H1 (cell line): ENCODE measurements at regions of chr11 and their contacts with region 1.

Region 1: GRCh38 chr11:66883016-66883968 is 26.4 kb downstream of the LRFN4 start:
- DNase-seq: peak in 1 of 2 experiments; percentile 97
- H3K4me3 ChIP-seq: no peak overlapping the region
- H3K27ac ChIP-seq: no peak overlapping the region
- H3K4me1 ChIP-seq: peaks cover 4 to 25% (median 16%) of the 10 kb centered on the region in 4 experiments
- H3K27me3 ChIP-seq: no peaks in the 10 kb centered on the region
- CTCF ChIP-seq: peak; percentile 83 to 95 (median 95)
- EP300 ChIP-seq: no peak
- POLR2A ChIP-seq: no peak
- RAD21 ChIP-seq: peak; percentile 81 to 83

Region 2: DNA sequence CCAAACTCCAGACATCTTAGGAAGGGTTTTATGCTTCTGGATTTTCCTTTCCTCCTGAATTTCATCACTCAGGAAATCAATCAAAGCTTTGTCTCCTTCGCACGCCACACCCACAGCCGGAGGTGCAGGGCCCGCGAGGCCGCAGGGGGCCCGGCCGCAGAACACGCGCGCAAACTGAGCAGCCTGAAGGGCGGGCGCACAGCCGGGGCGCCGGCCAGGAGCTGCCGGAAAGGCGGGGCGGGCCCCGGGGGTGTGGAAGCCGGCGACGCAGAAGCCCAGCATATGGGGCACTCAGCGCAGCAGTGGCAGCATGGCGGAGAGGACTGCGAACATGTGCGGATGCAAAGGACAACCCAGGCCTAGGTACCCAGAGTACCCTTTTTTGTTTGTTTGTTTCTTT is 121.2 kb before region 1 on chr11:
- CTCF ChIA-PET with region 1: no interaction called
- POLR2A ChIA-PET with region 1: no interaction called
- DNase-seq: no peak
- H3K4me3 ChIP-seq: no peak overlapping the region
- H3K27ac ChIP-seq: no peak overlapping the region
- H3K4me1 ChIP-seq: no peaks in the 10 kb centered on the region
- H3K27me3 ChIP-seq: no peaks in the 10 kb centered on the region
- CTCF ChIP-seq: no peak
- EP300 ChIP-seq: no peak
- POLR2A ChIP-seq: no peak
- RAD21 ChIP-seq: no peak

Region 3: GRCh38 chr11:66842896-66843775 is 40.2 kb before region 1 on chr11 and contains the start of gene RCE1:
- CTCF ChIA-PET with region 1: interaction called, 48 read pairs
- POLR2A ChIA-PET with region 1: interaction called, 5 read pairs
- DNase-seq: peak in 1 of 2 experiments; percentile 96
- H3K4me3 ChIP-seq: peak within 1 kb of the TSS; percentile 79 to 92 (median 90)
- H3K27ac ChIP-seq: peak within 1 kb of the TSS; percentile 88
- H3K4me1 ChIP-seq: peaks cover 0 to 11% (median 3%) of the 10 kb centered on the region in 4 experiments; a peak in 4 of 7 replicates
- H3K27me3 ChIP-seq: no peaks in the 10 kb centered on the region
- CTCF ChIP-seq: no peak
- EP300 ChIP-seq: peak in 1 of 2 experiments; percentile 40; a peak in 1 of 3 replicates
- POLR2A ChIP-seq: peak; percentile 77 to 98
- RAD21 ChIP-seq: no peak
- total RNA-seq, gene RCE1: 33.7 and 35.8 TPM in 2 replicates

Region 4: DNA sequence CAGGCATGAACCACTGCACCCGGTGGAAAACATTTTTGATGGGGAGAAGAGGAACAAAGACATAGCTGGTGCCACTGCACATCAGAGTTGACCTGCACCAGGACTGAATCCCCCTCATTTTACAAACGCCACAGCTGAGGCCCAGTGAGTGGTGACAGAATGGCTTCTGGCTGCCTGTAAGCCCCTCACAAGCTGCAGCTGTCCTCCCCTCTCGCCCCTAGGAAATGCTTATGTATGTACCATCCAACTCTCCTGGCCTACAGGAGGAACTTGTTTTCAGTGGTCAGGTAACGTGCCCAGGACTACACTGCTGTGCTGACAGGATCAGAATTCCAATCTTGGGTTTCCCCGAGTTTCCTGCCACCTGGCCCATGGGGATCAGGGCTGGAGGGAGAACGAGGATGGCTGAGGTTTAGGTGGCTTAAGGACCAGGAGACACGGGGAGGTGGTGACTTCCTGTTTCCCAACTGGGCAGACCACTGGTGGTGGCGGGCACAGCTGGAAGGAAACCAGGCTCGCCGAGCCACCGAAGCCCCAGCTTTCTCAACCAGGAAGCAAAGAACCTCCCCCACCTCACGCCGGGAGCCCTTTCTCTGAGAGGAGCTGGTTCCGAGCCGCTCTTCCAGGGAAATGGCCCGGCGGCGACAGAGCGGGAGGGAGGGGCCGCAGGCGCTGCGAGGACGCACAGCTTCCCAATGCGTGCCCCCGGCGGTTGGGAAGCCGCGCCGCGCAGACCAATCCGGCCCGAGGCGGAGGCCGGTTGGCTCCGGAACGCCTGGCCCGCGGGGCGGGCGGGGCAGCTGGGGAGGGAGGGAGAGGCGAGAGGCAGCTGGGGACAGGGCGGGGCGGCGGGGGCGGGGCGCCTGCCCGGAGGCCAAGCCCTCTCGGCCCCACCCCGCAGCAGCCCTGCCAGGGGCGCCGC is 27.5 kb before region 1 on chr11:
- CTCF ChIA-PET with region 1: interaction called, 199 read pairs
- POLR2A ChIA-PET with region 1: interaction called, 6 read pairs
- DNase-seq: peak; percentile 78 to 94
- H3K4me3 ChIP-seq: peak overlapping the region; percentile 71 to 92 (median 86)
- H3K27ac ChIP-seq: peak overlapping the region; percentile 78
- H3K4me1 ChIP-seq: peaks cover 5 to 20% (median 9%) of the 10 kb centered on the region in 4 experiments
- H3K27me3 ChIP-seq: no peaks in the 10 kb centered on the region
- CTCF ChIP-seq: no peak
- EP300 ChIP-seq: no peak
- POLR2A ChIP-seq: peak in 1 of 2 experiments; percentile 70; a peak in 2 of 3 replicates
- RAD21 ChIP-seq: no peak; a peak in 1 of 4 replicates

Region 5: DNA sequence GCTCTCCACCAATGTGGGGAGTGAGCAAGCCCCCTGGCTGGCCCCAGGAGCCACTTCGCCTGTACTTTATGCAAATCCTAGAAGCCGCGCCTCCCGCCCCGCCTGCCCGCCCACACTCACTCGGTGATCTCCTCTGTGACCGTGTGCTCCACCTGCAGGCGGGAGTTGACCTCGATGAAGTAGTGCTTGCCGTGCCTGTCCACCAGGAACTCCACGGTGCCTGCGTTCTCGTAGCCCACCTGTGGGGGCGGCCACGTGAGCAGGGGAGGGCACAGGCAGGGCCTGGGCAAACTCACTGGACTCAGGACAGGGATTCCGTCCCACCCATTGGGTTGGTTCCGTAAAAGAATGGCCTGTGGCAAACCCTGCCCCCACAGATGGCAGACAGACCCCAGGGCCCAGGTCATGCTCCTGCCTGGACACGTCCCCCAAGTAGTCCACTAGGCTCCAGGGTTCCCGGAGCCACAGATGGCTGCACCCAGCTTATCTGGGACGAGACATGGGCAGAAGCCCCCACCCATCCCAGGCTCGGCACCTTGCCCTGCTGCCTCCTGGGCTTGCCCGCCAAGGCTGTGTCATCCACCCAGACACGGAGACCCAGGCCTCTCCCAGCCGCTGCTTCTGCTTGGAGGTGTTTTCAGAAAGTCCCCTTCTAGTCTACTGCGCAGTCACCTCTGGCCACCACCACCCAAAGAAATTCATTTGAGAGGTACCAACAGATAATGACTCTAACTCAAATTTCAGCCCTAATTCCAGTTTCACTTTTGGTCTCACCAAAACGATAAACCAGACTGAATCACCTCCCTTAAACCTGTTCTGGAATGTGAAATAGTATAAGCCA is 14.3 kb before region 1 on chr11:
- CTCF ChIA-PET with region 1: interaction called, 199 read pairs
- POLR2A ChIA-PET with region 1: interaction called, 7 read pairs
- DNase-seq: peak in 1 of 2 experiments; percentile 89
- H3K4me3 ChIP-seq: no peak overlapping the region
- H3K27ac ChIP-seq: no peak overlapping the region
- H3K4me1 ChIP-seq: peaks cover 0 to 12% (median 2%) of the 10 kb centered on the region in 4 experiments; a peak in 5 of 7 replicates
- H3K27me3 ChIP-seq: no peaks in the 10 kb centered on the region
- CTCF ChIP-seq: peak in 2 of 3 experiments; percentile 90 to 97; a peak in 3 of 4 replicates
- EP300 ChIP-seq: no peak
- POLR2A ChIP-seq: no peak
- RAD21 ChIP-seq: peak; percentile 50 to 62

Region 6: GRCh38 chr11:66906061-66906735 is 22.9 kb after region 1 on chr11:
- CTCF ChIA-PET with region 1: interaction called, 12 read pairs
- POLR2A ChIA-PET with region 1: no interaction called
- DNase-seq: no peak
- H3K4me3 ChIP-seq: no peak overlapping the region
- H3K27ac ChIP-seq: peak overlapping the region; percentile 57; the same call in 1 of the 2 replicates
- H3K4me1 ChIP-seq: peaks cover 2 to 22% (median 13%) of the 10 kb centered on the region in 4 experiments
- H3K27me3 ChIP-seq: no peaks in the 10 kb centered on the region
- CTCF ChIP-seq: no peak
- EP300 ChIP-seq: no peak
- POLR2A ChIP-seq: no peak
- RAD21 ChIP-seq: no peak

Region 7: DNA sequence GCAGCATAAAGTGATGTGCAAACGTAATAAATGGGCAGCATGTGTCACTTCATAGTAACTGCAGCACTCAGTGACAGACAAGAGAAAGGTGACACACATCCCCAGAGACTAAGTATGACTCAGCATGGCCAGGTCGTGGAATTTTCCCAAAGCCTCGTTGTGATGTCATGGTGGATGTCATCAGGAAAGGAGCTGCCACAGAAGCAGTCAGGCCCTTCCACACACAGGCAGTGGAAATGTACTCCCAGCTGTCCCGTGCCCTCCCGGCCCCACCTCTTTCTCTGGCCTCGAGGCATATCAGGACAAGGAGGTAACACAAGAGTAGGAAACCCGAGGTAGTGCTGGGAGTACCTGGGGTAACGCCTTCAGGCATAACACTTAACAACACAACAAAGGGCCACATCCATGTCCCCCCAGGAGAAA is 66.8 kb after region 1 on chr11:
- CTCF ChIA-PET with region 1: interaction called, 16 read pairs
- POLR2A ChIA-PET with region 1: interaction called, 3 read pairs
- DNase-seq: no peak
- H3K4me3 ChIP-seq: no peak overlapping the region
- H3K27ac ChIP-seq: no peak overlapping the region; the same call in 1 of the 2 replicates
- H3K4me1 ChIP-seq: peaks cover 0 to 5% (median 2%) of the 10 kb centered on the region in 4 experiments; a peak in 4 of 7 replicates
- H3K27me3 ChIP-seq: no peaks in the 10 kb centered on the region
- CTCF ChIP-seq: no peak
- EP300 ChIP-seq: no peak
- POLR2A ChIP-seq: no peak
- RAD21 ChIP-seq: no peak

Region 8: DNA sequence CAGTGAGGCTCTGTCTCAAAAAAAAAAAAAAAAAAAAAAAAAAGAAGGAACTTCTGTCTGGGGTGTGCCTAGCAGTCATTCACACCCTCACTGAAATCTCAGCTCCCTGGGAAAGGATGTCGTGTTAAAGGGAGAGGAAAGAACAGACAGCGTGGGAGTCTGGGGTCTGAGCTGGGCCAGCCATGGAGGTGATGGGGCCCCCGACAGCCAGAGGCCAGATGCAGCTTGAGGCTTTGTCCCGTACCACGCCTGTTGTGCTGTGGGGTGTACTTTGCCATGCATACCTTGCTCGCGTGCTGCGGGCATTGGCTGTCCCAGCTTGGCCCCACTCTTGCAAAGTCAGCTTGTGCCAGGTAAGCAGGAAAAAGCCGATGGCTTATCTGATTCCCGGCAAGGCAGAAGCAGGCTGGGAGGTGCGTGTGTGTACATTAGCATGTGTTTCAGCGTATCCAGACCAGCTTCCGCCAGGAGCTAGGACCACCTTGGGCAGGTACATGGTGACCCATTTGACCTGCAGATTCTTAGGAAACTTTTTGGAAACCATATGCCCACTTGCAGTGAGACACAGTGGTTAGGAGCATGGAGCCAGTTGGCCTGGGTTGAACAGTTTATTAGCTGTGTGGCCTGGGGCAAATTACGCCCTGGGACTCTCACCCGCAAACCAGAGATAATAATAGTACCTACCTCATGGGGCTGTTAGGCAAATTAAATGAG is 144.3 kb after region 1 on chr11:
- CTCF ChIA-PET with region 1: interaction called, 19 read pairs
- POLR2A ChIA-PET with region 1: no interaction called
- DNase-seq: no peak
- H3K4me3 ChIP-seq: no peak overlapping the region
- H3K27ac ChIP-seq: no peak overlapping the region
- H3K4me1 ChIP-seq: peaks cover 2 to 16% (median 6%) of the 10 kb centered on the region in 4 experiments
- H3K27me3 ChIP-seq: peaks cover 18 to 29% (median 22%) of the 10 kb centered on the region in 4 experiments
- CTCF ChIP-seq: no peak
- EP300 ChIP-seq: no peak
- POLR2A ChIP-seq: no peak
- RAD21 ChIP-seq: no peak